ENCODE measurements at regions of chr9 and their contacts with region 1.

Region 1: DNA sequence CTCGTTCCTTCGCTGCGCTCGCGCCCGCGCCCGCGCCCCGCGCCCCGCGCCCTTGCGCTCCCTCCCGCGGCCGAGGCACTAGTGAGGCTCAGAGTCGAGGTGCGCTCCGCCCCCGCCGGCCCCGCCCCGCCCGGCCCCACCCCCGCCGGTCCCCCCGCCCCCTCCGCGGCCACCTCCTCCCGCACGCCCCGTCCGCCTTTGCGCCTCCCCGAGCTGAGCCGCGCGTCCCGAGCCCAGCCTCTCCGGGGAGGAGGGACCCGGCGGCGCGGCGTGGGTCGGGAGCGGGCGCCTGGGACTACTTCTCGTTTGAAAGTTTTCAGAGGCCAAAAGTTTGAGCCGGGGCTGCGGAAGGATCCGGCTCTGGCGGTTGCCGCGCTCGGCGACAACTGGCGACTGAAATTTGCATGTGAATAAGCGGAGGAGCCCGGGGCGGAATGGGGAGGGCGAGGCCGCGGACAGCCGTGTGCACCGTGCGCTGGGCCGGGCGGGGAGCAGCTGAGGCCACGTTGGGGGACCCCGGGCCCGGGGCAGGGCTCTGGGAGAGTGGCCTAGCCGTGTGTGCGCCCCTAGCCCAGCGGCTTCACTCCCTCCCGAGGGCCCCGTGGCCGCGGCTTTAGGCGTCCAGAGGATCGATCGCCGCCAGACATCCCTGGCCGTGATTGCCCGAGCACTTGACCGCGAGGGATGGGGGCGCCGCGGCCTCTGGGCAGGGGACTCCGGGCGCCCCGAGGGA is at the start of gene NOTCH1:
- DNase-seq: peak; percentile 94 to 97 (median 96)
- ATAC-seq: peak; percentile 64 to 86 (median 85)
- H3K4me3 ChIP-seq: peak within 1 kb of the TSS; percentile 66 to 100 (median 92)
- H3K27ac ChIP-seq: peak within 1 kb of the TSS; percentile 94 to 99 (median 98)
- H3K4me1 ChIP-seq: peaks cover 12 to 68% (median 45%) of the 10 kb centered on the region in 12 donors
- H3K27me3 ChIP-seq: no peaks in the 10 kb centered on the region
- CTCF ChIP-seq: peak in 5 of 12 donors; percentile 13 to 39 (median 20)
- POLR2A ChIP-seq: peak in 1 of 2 donors; percentile 72
- total RNA-seq, gene NOTCH1: 12.1 to 47.3 (median 22.1) TPM

Region 2: DNA sequence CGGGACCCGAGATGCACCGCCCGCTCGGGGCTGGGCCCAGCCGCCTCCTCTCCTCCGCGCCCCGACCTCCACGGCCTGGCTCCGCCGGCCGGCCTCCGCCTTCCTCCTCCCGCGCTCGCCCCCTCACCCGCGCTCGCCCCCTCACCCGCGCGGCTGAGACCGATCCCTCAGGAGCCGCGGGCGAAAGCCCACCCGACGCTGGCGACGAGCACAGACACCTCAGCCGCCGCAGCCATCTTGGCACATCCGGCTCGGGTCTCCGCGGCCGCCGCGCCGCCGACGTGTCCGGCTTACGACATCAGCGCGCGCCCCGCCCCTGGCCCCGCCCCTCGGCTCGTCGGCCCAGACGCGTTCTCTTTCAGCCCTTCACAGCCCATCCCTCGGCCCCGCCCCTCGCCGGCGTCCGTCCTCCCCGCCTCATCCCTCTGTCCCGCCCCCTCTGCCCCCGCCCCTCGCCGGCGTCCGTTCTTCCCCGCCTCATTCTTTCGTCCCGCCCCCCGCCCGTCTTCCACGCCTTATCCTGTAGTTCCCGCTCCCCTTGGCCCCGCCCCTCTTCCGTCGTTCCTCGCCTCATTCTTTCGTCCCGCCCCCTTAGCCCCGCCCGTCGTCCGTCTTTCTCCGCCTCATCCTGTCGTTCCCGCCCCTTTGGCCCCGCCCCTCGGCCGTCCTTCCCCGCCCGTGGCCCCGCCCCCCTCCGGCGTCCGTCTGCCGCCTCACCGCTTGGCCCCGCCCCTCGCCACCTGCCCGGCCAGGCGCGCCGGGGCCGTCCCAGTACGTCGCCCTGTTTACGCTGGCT is 63.1 kb before region 1 on chr9 and contains the start of gene SEC16A:
- intact Hi-C with region 1: loop called in 7 of 10 experiments (anchors 5 to 10 kb)
- DNase-seq: peak; percentile 99 to 100 (median 100)
- ATAC-seq: peak; percentile 83 to 92 (median 86)
- H3K4me3 ChIP-seq: peak within 1 kb of the TSS; percentile 72 to 100 (median 94)
- H3K27ac ChIP-seq: peak within 1 kb of the TSS; percentile 92 to 100 (median 99)
- H3K4me1 ChIP-seq: peaks cover 13 to 36% (median 26%) of the 10 kb centered on the region in 12 donors
- H3K27me3 ChIP-seq: no peaks in the 10 kb centered on the region
- CTCF ChIP-seq: no peak
- POLR2A ChIP-seq: peak; percentile 80 to 82
- total RNA-seq, gene SEC16A: 21.1 to 53.3 (median 30.2) TPM

Region 3: DNA sequence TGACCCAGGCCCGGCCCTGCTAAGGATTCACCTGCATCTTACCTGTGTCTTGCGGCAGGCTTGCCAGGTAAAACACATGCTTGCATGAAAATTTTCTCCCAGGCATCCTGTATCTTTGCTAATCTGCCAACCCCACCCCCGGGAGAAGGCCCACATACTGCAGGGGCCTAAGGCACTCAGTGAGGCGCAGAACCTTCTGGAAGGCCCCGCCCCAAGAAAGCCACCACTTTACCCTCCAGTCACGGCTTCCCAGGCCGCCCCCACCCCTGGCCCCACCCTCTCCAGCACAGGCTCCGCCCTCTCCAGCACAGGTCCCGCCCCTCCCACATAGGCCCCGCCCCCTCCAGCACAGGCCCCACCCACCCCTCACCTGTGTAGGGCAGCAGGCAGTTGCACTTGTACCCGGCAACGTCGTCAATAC is 33.5 kb before region 1 on chr9:
- intact Hi-C with region 1: loop called in 1 of 10 experiments (anchors 2 kb)
- DNase-seq: no peak
- ATAC-seq: peak in 3 of 4 donors; percentile 11 to 36 (median 21)
- H3K4me3 ChIP-seq: peak overlapping the region in 9 of 12 donors; percentile 8 to 42 (median 28)
- H3K27ac ChIP-seq: peak overlapping the region; percentile 66 to 99 (median 94)
- H3K4me1 ChIP-seq: peaks cover 6 to 43% (median 30%) of the 10 kb centered on the region in 12 donors
- H3K27me3 ChIP-seq: no peaks in the 10 kb centered on the region
- CTCF ChIP-seq: no peak
- POLR2A ChIP-seq: no peak

Region 4: DNA sequence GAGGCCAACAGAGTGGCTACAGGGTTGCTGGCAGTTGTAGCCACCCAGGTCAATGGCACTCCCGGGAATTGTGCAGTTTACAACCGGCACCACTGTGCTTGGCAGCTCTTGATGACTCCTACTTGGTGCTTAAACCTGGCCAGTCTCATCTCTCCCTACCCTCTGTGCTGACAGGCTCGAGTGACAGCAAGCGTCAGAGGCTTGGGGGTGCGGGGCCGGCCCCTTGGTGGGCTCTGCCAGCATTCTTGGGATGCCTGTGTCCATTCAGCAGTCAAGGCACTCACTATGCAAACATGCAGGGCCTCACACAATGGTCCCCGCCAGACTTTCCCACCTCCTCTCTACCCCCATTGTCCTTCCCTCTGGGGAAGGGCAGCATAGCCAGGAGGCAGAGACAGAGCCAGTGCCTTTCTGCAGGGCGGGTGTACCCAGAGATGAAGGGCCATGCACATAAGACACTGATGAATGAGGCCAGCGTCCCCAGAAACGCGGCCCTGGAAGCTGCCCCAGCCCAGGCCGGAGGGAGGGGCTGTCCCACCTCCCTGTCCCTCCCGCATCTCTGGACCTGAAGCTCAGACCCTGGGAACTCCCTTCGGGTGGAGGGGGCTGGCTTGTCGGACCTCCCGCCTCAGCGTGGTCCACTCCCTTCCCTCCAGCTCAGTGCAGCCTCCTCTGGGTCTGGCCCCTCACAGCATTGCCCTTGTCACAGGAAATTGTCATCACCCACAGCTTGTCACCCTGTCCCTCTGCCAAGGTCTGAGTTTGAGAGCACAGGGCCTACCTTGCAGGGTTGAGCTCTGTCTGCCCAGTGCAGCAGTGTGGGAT is 26.1 kb after region 1 on chr9:
- intact Hi-C with region 1: loop called in 2 of 10 experiments (anchors 2 kb)
- DNase-seq: peak; percentile 71 to 89 (median 83)
- ATAC-seq: peak; percentile 80 to 87 (median 84)
- H3K4me3 ChIP-seq: no peak overlapping the region
- H3K27ac ChIP-seq: peak overlapping the region; percentile 14 to 96 (median 74)
- H3K4me1 ChIP-seq: peaks cover 22 to 73% (median 50%) of the 10 kb centered on the region in 12 donors
- H3K27me3 ChIP-seq: no peaks in the 10 kb centered on the region
- CTCF ChIP-seq: no peak
- POLR2A ChIP-seq: no peak

Region 5: GRCh38 chr9:136625101-136626060 is 79.2 kb after region 1 on chr9:
- intact Hi-C with region 1: loop called in 6 of 10 experiments (anchors 2 to 10 kb)
- DNase-seq: peak; percentile 90 to 93 (median 91)
- ATAC-seq: peak; percentile 75 to 88 (median 83)
- H3K4me3 ChIP-seq: no peak overlapping the region
- H3K27ac ChIP-seq: peak overlapping the region in 11 of 12 donors; percentile 26 to 75 (median 54)
- H3K4me1 ChIP-seq: peaks cover 8 to 49% (median 36%) of the 10 kb centered on the region in 12 donors
- H3K27me3 ChIP-seq: no peaks in the 10 kb centered on the region
- CTCF ChIP-seq: peak; percentile 30 to 81 (median 63)
- POLR2A ChIP-seq: no peak

Measured in heart left ventricle (tissue), 16 donors.